Activated naive CD4-positive, alpha-beta T cell treated with anti-CD3 and anti-CD28 coated beads for 36 hours (primary cell): ENCODE measurements at regions of chr9 and their contacts with region 1.

Region 1: DNA sequence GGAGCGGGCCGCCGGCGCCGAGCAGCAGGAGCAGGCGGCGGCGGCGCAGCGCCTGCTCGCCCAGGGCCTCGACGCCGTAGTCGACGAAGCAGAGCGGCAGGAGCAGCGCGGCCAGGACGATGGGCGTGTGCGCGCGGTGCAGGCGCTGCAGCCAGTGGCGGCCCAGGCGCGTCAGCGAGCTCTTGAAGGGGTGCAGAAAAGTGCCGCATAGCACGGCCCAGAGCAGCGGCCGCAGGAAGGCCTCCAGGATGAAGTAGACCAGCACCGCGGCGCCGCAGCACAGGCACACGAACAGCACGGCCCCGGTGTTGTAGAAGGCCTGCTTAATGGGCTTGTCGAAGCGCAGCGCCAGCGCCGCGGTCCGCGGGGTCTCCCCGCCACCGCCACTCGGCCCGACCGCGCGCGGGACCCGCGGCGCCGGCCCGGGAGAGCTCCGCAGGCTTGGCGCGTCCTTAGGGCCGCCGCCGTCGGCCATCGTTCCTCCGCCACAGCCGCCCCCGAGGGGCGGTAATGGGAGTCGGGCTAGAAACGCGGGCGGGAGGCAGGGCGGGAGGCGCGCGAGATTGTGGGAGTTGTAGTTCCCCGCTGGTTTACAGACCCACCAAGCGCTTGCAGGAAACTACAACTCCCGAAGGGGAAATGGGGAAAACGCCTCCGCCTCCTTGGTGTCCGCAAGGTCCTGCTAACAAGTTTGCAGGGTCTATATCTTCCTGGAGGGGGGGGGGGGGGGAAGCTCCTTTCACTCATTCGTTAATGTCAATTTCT is at the start of gene TMEM245:
- DNase-seq: peak; percentile 97
- H3K4me3 Mint-ChIP-seq: peak within 1 kb of the TSS; percentile 90
- H3K27ac Mint-ChIP-seq: peak within 1 kb of the TSS; percentile 78
- H3K4me1 Mint-ChIP-seq: peaks cover 40% of the 10 kb centered on the region
- H3K27me3 Mint-ChIP-seq: no peaks in the 10 kb centered on the region
- total RNA-seq, gene TMEM245: 19.9 TPM

Region 2: GRCh38 chr9:108333530-108333983 is 786.1 kb before region 1 on chr9:
- CTCF ChIA-PET with region 1: no interaction called
- intact Hi-C with region 1: no loop called
- DNase-seq: no peak
- H3K4me3 Mint-ChIP-seq: no peak overlapping the region
- H3K27ac Mint-ChIP-seq: no peak overlapping the region
- H3K4me1 Mint-ChIP-seq: no peaks in the 10 kb centered on the region
- H3K27me3 Mint-ChIP-seq: no peaks in the 10 kb centered on the region

Region 3: GRCh38 chr9:108850293-108850897 is 269.2 kb before region 1 on chr9:
- CTCF ChIA-PET with region 1: no interaction called
- intact Hi-C with region 1: loop called (anchors 1 kb)
- DNase-seq: no peak
- H3K4me3 Mint-ChIP-seq: no peak overlapping the region
- H3K27ac Mint-ChIP-seq: no peak overlapping the region
- H3K4me1 Mint-ChIP-seq: no peaks in the 10 kb centered on the region
- H3K27me3 Mint-ChIP-seq: no peaks in the 10 kb centered on the region

Region 4: DNA sequence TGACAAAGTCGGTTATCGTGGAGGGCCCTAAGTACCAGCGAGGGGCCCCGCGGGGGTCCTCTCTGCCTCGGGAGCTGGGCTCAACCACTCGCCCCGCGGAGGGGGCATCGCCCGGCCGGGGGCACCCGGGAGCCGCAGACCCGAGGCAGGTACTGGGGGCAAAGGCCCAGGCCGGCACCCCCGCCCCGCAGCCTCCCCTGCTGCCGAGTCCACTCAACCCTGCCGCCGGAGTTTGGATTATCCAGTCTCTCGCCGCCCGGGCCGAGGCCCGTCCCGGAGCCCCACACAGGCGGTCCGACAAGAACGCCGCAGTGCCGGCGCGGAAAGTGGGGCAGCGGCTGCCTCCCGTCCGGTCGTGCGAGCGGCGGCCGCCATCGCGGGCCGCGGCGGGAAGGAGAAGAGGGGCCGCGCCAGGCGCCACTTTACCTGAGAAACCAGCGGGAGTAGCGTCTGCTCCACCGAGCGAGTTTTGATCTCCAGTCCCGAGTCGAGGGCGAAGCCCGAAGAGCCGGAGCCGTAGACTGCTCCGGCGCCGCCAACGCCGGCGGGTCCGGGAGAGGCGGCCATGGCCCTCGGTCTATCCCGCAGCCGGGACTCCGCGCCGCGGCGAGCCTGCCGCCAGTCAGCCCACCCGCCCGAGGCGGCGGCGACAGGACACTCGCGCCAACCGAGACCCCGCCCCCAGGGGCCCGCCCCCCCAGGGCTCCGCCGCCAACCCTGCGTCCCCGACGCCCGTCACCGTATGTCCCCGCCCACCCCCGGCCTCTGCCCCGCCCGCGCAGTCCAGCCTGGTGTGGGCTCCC is 106.5 kb before region 1 on chr9 and contains the start of gene CTNNAL1:
- CTCF ChIA-PET with region 1: no interaction called
- intact Hi-C with region 1: loop called (anchors 1 kb)
- DNase-seq: peak; percentile 86
- H3K4me3 Mint-ChIP-seq: peak within 1 kb of the TSS; percentile 95
- H3K27ac Mint-ChIP-seq: peak within 1 kb of the TSS; percentile 68
- H3K4me1 Mint-ChIP-seq: peaks cover 28% of the 10 kb centered on the region
- H3K27me3 Mint-ChIP-seq: no peaks in the 10 kb centered on the region
- total RNA-seq, gene CTNNAL1: 18.4 to 19.0 TPM

Region 5: DNA sequence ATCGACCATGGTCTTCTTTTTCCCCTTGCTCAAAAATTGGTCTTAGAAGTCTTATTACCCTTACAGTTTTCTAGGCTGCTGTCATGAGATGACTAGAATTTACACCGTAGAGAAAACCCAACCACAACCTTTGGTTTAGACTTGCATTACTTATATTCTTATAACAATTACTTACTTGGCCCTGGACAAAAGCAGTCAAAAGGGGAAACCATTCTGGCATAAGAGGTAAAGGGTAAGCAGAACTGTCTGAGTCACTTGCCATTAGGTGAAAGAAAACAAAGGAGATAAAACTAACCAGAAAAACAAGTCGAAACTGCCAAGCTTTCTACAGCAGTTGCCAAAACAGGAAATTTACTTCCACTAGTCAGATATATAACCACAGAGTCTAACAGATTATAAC is 17.8 kb before region 1 on chr9:
- CTCF ChIA-PET with region 1: no interaction called
- intact Hi-C with region 1: loop called (anchors 1 kb)
- DNase-seq: no peak
- H3K4me3 Mint-ChIP-seq: peak overlapping the region; percentile 37
- H3K27ac Mint-ChIP-seq: peak overlapping the region; percentile 75
- H3K4me1 Mint-ChIP-seq: peaks cover 64% of the 10 kb centered on the region
- H3K27me3 Mint-ChIP-seq: no peaks in the 10 kb centered on the region

Region 6: DNA sequence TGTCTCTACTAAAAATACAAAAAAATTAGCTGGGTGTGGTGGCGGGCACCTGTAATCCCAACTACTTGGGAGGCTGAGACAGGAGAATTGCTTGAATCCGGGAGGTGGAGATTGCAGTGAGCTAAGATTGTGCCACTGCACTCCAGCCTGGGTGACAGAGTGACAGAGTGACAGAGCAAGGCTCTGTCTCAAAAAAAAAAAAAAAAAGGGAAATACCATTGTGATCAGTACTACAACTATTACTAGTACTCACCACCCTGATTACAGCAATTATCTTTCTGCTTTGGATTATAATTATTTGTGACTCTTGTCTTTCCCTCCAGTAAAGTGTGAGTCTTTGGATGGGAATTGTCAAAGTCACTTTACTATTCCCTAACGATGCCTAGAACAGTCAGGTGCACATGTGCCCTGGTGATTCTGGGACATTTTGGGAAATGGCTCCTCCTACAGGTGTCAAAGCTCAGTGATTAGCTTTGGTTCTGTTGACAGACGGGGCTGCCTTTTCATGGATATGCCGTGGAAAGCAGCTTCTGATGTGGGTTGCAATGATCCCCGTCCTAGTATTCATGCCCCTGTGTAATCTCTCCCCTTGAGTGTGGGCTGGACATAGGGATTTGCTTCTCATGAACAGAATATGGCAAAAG is 79.2 kb after region 1 on chr9:
- CTCF ChIA-PET with region 1: no interaction called
- intact Hi-C with region 1: loop called (anchors 2 kb)
- DNase-seq: peak; percentile 26
- H3K4me3 Mint-ChIP-seq: no peak overlapping the region
- H3K27ac Mint-ChIP-seq: no peak overlapping the region
- H3K4me1 Mint-ChIP-seq: peaks cover 2% of the 10 kb centered on the region
- H3K27me3 Mint-ChIP-seq: peaks cover 3% of the 10 kb centered on the region

Region 7: GRCh38 chr9:109369285-109369684 is 249.7 kb after region 1 on chr9:
- CTCF ChIA-PET with region 1: no interaction called
- intact Hi-C with region 1: no loop called
- DNase-seq: no peak
- H3K4me3 Mint-ChIP-seq: no peak overlapping the region
- H3K27ac Mint-ChIP-seq: no peak overlapping the region
- H3K4me1 Mint-ChIP-seq: no peaks in the 10 kb centered on the region
- H3K27me3 Mint-ChIP-seq: peaks cover 4% of the 10 kb centered on the region